ENCODE measurements at regions of chr14 and their contacts with region 1.

Region 1: DNA sequence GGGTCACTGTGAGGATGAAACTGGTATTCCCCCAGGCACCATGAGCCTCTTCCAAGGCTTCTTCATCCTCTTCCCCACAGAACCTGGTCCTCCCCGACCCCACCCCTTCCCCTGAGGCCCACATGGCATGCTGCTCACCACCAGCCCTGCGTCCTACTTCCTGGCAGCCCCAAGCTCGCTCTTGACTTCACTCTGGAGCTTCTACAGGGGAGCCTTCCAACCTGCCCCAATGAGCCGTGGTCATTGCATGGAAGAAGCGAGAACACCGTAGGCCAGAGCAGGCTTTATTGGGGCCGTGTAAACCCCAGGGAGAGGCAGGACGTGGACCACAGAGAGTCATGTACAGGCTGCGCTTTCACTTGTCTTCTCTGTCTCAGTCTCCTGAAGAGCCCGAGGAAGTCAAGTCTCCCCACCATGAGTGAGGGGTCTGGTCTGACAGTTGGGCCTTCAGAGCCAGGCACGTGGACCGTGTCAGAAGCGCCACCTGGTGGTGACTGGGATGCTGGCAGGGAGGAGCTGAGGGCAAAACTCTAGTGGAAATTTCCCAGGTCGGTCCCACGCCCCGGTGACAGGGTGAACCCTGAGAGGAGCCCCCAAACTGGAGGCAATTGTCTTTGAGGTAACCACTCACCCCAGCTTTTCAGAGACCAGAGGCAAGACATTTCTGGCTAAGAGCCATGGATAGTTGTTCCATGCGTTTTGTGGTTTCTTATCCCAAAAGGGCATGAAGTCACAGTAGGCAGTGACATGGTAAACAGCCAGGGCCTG is 17.5 kb downstream of the RPS6KL1 start:
- DNase-seq: peak; percentile 86
- H3K4me3 ChIP-seq: no peak overlapping the region; a peak in 1 of 4 replicates
- H3K27ac ChIP-seq: peak overlapping the region in 1 of 2 experiments; percentile 39; a peak in 2 of 4 replicates
- H3K4me1 ChIP-seq: no peaks in the 10 kb centered on the region; a peak in 1 of 4 replicates
- H3K27me3 ChIP-seq: no peaks in the 10 kb centered on the region
- CTCF ChIP-seq: peak; percentile 97
- EP300 ChIP-seq: no peak
- RAD21 ChIP-seq: peak; percentile 73

Region 2: GRCh38 chr14:74867673-74868072 is 37.9 kb before region 1 on chr14:
- CTCF ChIA-PET with region 1: interaction called, 537 read pairs
- POLR2A ChIA-PET with region 1: interaction called, 3 read pairs
- DNase-seq: peak; percentile 61
- H3K4me3 ChIP-seq: no peak overlapping the region
- H3K27ac ChIP-seq: peak overlapping the region in 1 of 2 experiments; percentile 66; a peak in 2 of 4 replicates
- H3K4me1 ChIP-seq: peaks cover 0 to 4% of the 10 kb centered on the region in 2 experiments; a peak in 1 of 4 replicates
- H3K27me3 ChIP-seq: no peaks in the 10 kb centered on the region
- CTCF ChIP-seq: no peak
- EP300 ChIP-seq: no peak
- RAD21 ChIP-seq: no peak

Region 3: GRCh38 chr14:74893614-74894091 is 11.9 kb before region 1 on chr14:
- CTCF ChIA-PET with region 1: interaction called, 124 read pairs
- POLR2A ChIA-PET with region 1: no interaction called
- DNase-seq: no peak
- H3K4me3 ChIP-seq: no peak overlapping the region
- H3K27ac ChIP-seq: no peak overlapping the region
- H3K4me1 ChIP-seq: peaks cover 0 to 2% of the 10 kb centered on the region in 2 experiments; a peak in 1 of 4 replicates
- H3K27me3 ChIP-seq: no peaks in the 10 kb centered on the region
- CTCF ChIP-seq: no peak
- EP300 ChIP-seq: no peak
- RAD21 ChIP-seq: no peak

Region 4: GRCh38 chr14:74922739-74923401 is 17.3 kb after region 1 on chr14 and contains the start of gene RPS6KL1:
- CTCF ChIA-PET with region 1: interaction called, 17 read pairs
- POLR2A ChIA-PET with region 1: interaction called, 4 read pairs
- DNase-seq: peak; percentile 98
- H3K4me3 ChIP-seq: peak within 1 kb of the TSS; percentile 52 to 61
- H3K27ac ChIP-seq: no peak within 1 kb of the TSS
- H3K4me1 ChIP-seq: no peaks in the 10 kb centered on the region; a peak in 1 of 4 replicates
- H3K27me3 ChIP-seq: peaks cover 6% of the 10 kb centered on the region; the same call in 1 of the 2 replicates
- CTCF ChIP-seq: no peak
- EP300 ChIP-seq: no peak
- RAD21 ChIP-seq: no peak
- polyA plus RNA-seq, gene RPS6KL1: 2.5 and 4.4 TPM in 2 replicates

Region 5: DNA sequence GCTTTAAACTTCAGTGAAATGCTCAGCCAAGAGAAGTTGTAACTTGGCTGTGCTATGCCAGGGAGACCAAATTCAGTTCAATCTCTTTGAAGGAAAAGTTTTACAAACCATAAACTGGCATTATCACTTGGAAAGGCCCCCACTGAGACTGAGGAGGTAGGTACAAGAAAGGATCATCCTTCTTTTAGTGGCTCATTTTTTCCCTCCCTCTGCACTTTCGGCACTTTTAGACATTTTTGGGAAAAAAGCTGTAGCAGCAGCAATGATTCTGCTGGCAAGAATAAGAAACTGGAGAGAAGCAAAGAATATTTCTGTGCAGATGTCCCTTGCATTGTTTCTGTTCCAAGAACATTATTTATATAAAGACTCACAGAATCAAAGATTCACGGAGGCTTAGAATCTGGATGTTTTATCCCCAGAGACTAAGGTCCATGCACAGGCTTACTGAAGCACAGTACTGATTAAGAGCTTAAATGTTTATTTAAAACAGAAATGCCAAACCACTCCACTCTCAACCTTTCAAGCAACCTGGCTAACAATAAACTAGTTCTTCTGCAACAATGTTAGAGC is 176.2 kb after region 1 on chr14:
- CTCF ChIA-PET with region 1: interaction called, 10 read pairs
- POLR2A ChIA-PET with region 1: no interaction called
- DNase-seq: no peak
- H3K4me3 ChIP-seq: no peak overlapping the region
- H3K27ac ChIP-seq: peak overlapping the region; percentile 11 to 41; a peak in 3 of 4 replicates
- H3K4me1 ChIP-seq: peaks cover 0 to 16% of the 10 kb centered on the region in 2 experiments; a peak in 2 of 4 replicates
- H3K27me3 ChIP-seq: no peaks in the 10 kb centered on the region
- CTCF ChIP-seq: no peak
- EP300 ChIP-seq: no peak
- RAD21 ChIP-seq: no peak

Measured in SK-N-SH (cell line).